H1 (cell line): ENCODE measurements at regions of chr16 and their contacts with region 1.

Region 1: DNA sequence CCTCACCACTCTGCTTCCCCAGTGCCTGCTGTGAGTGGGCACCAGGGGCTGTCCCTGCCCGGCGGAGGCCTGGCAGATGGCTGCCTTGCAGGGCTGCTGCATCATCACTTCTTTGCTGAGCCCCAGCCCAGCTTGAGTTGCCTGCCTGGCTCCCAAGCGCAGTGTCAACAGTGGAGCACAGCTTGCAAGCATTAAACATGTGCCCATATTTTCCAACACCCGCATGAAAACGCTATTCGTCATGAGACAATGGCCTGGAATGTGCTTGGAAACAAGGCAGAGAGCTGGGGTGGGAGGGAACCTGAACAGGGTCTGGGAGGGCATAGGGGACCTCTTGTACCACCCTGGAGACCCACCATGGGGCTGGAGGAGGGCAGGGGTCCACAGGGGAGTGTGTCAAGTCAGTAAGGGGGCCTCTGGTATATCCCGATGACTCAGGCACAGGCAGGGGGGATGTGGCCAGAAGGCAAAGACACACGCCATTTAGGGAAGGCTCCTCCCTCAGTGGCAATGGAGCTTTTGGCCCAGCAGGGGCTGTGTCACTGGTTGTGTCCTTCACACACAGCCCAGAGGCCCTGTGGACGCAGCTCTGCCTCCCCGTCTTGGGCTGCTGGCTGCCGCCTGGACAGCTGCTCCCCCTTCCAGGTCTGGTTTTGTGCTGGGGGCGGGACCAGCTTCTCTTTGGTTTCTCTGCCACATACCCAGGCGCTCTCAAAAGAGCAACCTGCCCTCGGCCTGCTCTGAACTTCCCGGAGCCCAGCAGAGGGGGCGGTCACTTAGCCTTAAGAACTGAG is 17.4 kb upstream of the MTSS2 start:
- DNase-seq: no peak
- H3K4me3 ChIP-seq: no peak overlapping the region
- H3K27ac ChIP-seq: no peak overlapping the region
- H3K4me1 ChIP-seq: peaks cover 0 to 14% (median 9%) of the 10 kb centered on the region in 4 experiments; a peak in 5 of 7 replicates
- H3K27me3 ChIP-seq: no peaks in the 10 kb centered on the region
- CTCF ChIP-seq: peak in 1 of 3 experiments; percentile 16; a peak in 1 of 4 replicates
- EP300 ChIP-seq: no peak
- POLR2A ChIP-seq: no peak
- RAD21 ChIP-seq: no peak

Region 2: DNA sequence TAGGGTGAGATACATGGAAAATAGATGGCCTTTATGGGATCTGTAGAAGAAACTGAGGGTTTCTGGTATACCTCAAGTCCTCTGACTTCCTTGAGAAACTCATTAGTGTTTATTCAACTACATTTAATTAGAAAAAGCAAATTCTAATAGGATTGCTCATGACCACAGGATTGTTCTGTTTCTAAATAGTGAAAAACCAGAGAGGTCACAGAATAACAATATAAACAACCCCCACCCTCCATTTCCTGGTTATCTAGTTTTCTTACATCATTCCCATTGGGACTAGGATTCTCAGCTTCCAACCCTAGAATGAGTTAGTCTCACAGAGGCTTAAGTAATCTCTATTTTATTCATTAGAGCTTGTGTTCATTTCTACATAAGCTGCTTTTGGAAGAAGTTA is 149.6 kb before region 1 on chr16:
- CTCF ChIA-PET with region 1: no interaction called
- POLR2A ChIA-PET with region 1: no interaction called
- DNase-seq: no peak
- H3K4me3 ChIP-seq: no peak overlapping the region
- H3K27ac ChIP-seq: no peak overlapping the region
- H3K4me1 ChIP-seq: no peaks in the 10 kb centered on the region
- H3K27me3 ChIP-seq: no peaks in the 10 kb centered on the region
- CTCF ChIP-seq: no peak
- EP300 ChIP-seq: no peak
- POLR2A ChIP-seq: no peak
- RAD21 ChIP-seq: no peak

Region 3: DNA sequence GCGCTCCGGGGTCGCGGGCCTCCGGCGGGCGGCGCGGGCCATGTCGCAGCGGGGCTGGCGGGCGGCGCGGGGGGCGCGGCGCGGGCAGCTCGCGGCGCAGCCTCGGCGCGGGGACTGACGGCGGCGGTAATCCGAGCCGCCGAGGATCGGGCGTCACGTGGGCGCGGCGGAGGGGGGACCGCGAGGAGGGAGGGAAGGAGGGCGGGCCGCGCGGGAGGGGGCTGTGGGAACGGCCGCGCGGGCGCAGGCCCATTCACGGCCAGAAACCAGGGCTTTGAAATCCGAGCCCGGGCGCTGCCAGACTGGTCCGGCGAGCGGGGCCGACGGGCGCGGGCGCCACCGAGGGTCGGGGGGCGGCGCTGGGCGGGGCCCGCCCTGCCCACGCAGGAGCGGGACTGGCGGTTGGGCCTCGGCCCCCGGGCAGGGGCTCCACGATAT is 17.3 kb before region 1 on chr16 and contains the start of gene MTSS2:
- CTCF ChIA-PET with region 1: interaction called, 15 read pairs
- POLR2A ChIA-PET with region 1: interaction called, 5 read pairs
- DNase-seq: peak in 1 of 2 experiments; percentile 83
- H3K4me3 ChIP-seq: peak within 1 kb of the TSS; percentile 49 to 81 (median 65)
- H3K27ac ChIP-seq: no peak within 1 kb of the TSS
- H3K4me1 ChIP-seq: peaks cover 0 to 25% (median 14%) of the 10 kb centered on the region in 4 experiments; a peak in 6 of 7 replicates
- H3K27me3 ChIP-seq: peaks cover 0 to 8% (median 3%) of the 10 kb centered on the region in 4 experiments; a peak in 4 of 7 replicates
- CTCF ChIP-seq: no peak
- EP300 ChIP-seq: no peak
- POLR2A ChIP-seq: 0 out of 3 replicates have a peak, but pooled peaks of 1 of the 2 experiments have one; percentile 19
- RAD21 ChIP-seq: no peak
- total RNA-seq, gene MTSS2: 34.2 and 36.7 TPM in 2 replicates

Region 4: GRCh38 chr16:70715055-70715858 is 12.0 kb after region 1 on chr16:
- CTCF ChIA-PET with region 1: interaction called, 10 read pairs
- POLR2A ChIA-PET with region 1: interaction called, 4 read pairs
- DNase-seq: no peak
- H3K4me3 ChIP-seq: no peak overlapping the region
- H3K27ac ChIP-seq: no peak overlapping the region
- H3K4me1 ChIP-seq: peaks cover 4 to 34% (median 22%) of the 10 kb centered on the region in 4 experiments
- H3K27me3 ChIP-seq: no peaks in the 10 kb centered on the region
- CTCF ChIP-seq: no peak
- EP300 ChIP-seq: no peak
- POLR2A ChIP-seq: no peak
- RAD21 ChIP-seq: no peak